Left ventricle myocardium inferior (tissue), 1 donor: ENCODE measurements at regions of chr1 and their contacts with region 1.

Region 1: DNA sequence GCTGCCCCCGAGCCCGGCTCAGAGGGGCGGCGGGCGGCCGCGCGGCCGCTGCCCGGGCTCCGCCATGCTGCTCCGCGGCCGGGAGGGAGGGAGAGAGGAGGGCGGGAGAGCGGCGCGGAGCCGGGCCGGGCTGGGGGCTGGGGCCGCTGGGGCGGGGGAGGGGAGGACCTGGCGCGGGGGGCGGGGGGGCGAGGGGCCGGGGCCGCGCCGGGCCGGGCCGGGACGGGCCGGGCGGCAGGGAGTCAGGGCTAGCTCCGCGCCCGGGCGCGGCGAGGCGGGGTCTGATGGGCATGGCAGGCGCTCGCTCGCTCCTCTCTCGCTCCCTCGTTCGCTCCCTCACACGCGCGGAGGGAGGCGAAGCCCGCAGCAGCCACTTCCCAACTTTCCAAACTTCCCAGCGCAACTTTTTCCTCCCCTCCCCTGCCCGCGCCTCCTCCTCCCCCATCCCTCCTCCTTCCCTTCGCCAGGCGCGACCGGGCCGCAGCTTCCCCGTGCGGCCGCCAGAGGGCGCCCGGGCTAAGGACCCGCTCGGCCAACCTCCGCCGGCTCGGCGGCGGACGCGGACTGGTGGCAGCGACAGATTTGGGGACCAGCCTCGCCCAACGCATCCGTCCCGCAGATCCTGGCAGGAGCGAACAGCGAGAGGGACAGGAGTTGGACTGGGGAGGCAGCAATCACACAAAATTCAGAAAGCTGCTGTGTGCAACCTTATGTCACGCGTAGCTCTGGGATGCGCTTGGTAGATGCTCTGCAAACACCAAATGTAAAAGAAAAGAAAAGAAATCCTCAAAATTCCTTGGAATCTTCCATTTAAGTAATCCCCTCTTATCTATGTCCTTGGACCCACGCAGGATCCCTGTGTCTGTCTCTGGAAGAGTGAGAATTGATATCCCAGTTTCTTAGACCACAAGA is at the start of gene TRABD2B:
- DNase-seq: peak; percentile 82
- H3K4me3 ChIP-seq: peak within 1 kb of the TSS; percentile 73
- H3K27ac ChIP-seq: peak within 1 kb of the TSS; percentile 74
- H3K4me1 ChIP-seq: peaks cover 22% of the 10 kb centered on the region
- H3K27me3 ChIP-seq: peaks cover 84% of the 10 kb centered on the region
- CTCF ChIP-seq: peak; percentile 96
- total RNA-seq, gene TRABD2B: 1.4 TPM

Region 2: DNA sequence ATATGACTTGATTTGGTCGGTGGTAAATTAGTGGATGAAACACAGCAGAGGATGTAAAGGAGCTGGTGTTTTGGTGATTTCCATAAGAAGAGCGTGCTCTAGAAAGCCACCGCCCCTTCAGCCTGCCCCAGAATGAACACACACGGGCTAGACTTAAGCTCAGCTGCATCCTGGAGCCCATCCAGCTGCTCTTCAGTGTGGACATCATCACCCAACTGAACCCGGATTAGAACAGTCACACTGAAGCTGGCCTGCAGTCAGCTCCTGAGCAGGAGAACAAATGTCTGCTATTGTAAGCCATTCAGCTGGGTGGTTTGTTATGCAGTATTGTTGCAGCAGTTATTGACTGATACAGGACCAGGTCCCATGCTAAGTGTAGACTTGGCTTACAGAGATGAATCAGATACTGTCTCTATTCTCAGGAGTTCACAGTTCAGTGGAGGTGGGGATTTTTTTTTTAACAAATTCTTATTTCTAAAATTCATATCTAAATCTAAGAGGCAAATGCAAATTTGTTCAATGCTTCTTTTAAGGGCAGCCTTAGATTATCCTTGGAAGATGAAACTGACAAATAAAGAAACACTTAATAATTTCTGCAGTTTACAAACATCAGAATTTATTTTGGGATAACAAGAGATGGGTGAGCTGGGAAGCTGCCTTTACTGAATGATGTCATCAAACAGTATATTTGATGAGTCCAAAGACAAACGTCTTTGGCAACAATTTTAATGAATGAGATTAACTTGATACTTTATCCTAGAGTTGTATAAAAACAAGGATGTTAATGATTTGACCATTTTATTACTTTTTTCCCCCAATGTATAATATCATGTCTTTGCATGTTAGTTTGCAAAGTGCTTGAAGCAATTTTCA is 251.6 kb before region 1 on chr1:
- intact Hi-C with region 1: loop called (anchors 10 kb)
- DNase-seq: no peak
- H3K4me3 ChIP-seq: no peak overlapping the region
- H3K27ac ChIP-seq: no peak overlapping the region
- H3K4me1 ChIP-seq: no peaks in the 10 kb centered on the region
- H3K27me3 ChIP-seq: peaks cover 21% of the 10 kb centered on the region
- CTCF ChIP-seq: no peak

Region 3: DNA sequence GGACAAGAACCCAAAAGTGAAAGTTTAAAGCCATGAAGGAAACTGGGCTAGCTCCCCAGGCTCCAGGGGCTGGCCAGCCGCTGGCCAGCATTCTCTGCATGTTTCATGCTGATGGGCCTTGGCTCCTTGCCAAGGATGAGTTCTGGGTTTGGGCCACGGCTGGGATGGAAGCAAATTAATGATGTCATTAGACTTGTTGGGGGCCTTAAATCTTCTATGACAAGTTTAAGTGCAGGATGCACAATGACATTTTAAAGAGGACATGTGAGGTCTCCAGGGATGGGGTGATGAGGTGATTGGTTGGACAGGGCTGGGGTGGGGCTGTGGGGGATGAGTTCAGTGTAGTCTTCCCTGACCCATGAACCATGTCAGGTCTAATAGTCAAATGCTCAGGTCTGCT is 200.0 kb before region 1 on chr1:
- intact Hi-C with region 1: loop called (anchors 10 kb)
- DNase-seq: no peak
- H3K4me3 ChIP-seq: no peak overlapping the region
- H3K27ac ChIP-seq: no peak overlapping the region
- H3K4me1 ChIP-seq: peaks cover 6% of the 10 kb centered on the region
- H3K27me3 ChIP-seq: no peaks in the 10 kb centered on the region
- CTCF ChIP-seq: no peak

Region 4: DNA sequence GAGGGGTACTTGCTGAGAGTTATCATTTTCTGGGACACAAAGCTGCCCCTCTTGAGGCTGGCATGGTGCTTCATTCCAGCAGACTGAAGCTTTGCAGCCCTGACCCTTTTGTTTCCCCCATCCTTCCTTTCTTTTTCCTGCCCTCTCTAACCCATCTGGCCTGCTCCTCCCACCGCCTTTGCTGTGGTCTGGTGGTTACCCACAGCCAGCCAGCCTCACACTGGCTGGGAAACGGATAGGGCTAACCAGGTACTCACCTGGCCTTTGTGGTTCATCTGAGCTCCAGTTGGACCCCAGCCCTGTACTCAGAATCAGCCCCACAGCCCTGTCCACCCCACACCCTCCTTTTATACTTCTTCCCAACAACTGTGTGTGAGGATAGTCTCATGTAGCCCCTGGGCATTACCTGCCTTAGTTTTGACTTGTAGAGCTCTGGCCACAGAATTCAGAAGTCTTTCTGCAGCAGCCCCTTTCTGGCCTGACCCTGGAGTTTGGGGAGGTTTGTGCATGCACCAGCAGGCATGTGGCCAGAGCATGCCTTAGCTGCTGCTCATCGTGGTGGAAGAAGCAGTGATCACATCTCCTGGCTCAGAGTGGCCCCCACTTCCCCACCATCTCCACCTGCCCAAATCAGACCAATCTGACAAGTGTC is 138.3 kb before region 1 on chr1:
- intact Hi-C with region 1: no loop called
- DNase-seq: no peak
- H3K4me3 ChIP-seq: no peak overlapping the region
- H3K27ac ChIP-seq: no peak overlapping the region
- H3K4me1 ChIP-seq: no peaks in the 10 kb centered on the region
- H3K27me3 ChIP-seq: peaks cover 4% of the 10 kb centered on the region
- CTCF ChIP-seq: no peak

Region 5: DNA sequence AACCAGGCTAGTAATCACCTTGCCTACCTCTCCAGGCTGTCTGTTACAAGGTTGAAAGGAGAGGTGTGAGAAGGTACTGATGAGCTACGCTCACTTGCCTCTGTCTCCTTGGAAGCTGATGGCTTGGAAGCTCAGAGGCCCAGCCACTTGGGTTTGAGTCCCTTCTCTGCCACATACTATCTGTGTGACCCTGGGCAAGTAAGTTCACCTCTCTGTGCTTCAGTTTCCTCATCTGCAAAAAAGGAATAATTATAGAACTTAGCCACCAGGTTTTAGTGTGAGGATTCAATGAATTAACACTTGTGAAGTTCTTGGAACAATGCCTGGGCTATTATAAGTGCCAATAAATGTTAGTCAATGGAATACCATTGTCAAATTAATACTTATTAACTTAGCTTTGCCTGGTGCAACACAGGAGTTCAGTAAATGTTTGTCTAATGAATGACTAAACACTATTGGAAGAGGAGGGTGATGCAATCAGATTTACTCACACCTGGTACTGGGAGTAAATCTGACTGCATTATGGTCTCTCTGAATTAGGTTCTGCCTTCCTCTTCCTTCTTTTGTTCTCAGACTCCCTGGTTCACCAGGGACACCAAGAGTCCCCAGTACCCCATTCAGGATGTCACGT is 55.8 kb before region 1 on chr1:
- intact Hi-C with region 1: no loop called
- DNase-seq: no peak
- H3K4me3 ChIP-seq: no peak overlapping the region
- H3K27ac ChIP-seq: no peak overlapping the region
- H3K4me1 ChIP-seq: peaks cover 16% of the 10 kb centered on the region
- H3K27me3 ChIP-seq: peaks cover 11% of the 10 kb centered on the region
- CTCF ChIP-seq: no peak

Region 6: DNA sequence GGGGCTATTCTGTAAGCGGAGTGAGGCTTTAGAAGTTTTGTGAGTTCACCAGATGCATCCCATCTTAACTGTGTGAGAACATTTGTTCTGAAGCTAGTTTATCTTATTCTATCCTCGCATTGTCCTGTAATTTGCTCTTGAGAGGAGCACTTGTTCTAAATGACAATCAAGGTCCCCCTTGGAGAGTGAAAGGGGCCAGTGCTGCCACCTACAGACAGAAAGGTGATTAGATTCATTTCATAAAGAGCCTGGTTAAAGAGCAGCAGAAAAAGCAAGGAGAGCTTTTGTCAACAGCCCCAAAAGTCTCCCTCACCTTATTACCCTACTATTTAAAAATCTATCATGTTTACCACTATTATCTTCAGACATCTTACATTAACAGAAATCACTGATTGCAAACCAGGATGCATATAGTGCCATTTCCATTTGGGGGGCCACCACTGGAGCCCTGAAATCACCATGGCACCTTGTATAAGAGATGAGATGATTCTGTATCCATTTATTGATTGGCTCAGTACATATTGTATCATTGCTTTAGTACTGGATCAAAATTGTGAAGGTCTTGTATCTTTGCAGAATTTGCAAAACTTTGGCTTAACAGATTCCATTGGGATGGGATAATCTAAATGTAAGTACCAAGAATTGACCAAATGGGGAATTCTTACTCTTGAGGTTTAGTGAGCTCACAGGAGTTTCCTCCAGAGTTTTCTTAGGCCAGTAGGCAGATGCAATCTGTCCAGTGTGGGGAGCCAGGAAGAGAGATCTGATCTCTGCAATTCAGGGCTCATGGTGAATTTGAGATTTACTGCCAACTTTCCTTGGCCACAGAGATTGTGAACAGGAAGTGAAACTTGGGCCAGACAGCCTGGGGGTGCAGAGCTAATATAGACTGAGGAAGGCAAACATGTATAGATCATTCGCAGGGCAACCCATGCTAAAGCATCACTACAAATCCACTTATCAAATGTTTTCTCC is 63.9 kb after region 1 on chr1:
- intact Hi-C with region 1: loop called (anchors 10 kb)
- DNase-seq: peak; percentile 32
- H3K4me3 ChIP-seq: no peak overlapping the region
- H3K27ac ChIP-seq: no peak overlapping the region
- H3K4me1 ChIP-seq: no peaks in the 10 kb centered on the region
- H3K27me3 ChIP-seq: peaks cover 78% of the 10 kb centered on the region
- CTCF ChIP-seq: peak; percentile 80